Dorsolateral prefrontal cortex (tissue), 120 donors: ENCODE measurements at regions of chr3 and their contacts with region 1.

Region 1: GRCh38 chr3:66038726-66039589 is at the start of gene MAGI1:
- DNase-seq: peak; percentile 69 to 93 (median 88)
- H3K4me3 ChIP-seq: peak within 1 kb of the TSS; percentile 48 to 99 (median 88)
- H3K27ac ChIP-seq: peak within 1 kb of the TSS in 58 of 59 donors; percentile 44 to 97 (median 89)
- H3K27me3 ChIP-seq: no peaks in the 10 kb centered on the region
- CTCF ChIP-seq: peak in 30 of 56 donors; percentile 3 to 55 (median 20)
- total RNA-seq, gene MAGI1: 49.8 to 112 (median 77.4) TPM

Region 2: DNA sequence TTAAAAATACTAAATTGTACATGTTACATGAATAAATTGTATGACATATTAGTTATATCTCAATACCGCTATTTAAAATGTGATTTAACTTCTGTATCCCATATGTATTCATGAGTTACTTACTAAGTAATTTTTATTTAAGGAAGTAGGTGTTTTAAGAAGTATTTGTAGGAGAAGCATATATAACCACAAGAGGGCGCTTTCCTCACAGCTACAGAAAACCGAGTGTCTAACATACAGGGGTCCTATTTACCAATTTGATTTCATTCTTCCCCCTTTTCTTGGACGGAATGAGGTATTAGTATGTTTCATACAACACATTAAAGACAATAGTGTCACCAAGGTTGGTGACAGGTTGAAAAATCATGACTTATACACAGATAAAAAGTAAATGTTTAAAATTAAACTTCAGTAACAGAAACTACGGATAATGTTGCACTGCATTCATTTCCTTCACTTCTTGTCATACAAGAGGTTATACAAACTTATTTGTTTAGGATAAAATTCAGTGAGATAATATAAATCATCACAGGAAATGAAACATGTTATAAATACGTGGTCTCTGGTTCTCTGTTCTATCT is 253.8 kb before region 1 on chr3:
- intact Hi-C with region 1: loop called (anchors 5 kb)
- DNase-seq: peak in 1 of 10 donors; percentile 23
- H3K4me3 ChIP-seq: peak overlapping the region in 7 of 59 donors; percentile 8 to 26 (median 15)
- H3K27ac ChIP-seq: peak overlapping the region in 8 of 59 donors; percentile 7 to 56 (median 44)
- H3K27me3 ChIP-seq: no peaks in the 10 kb centered on the region
- CTCF ChIP-seq: peak; percentile 70 to 97 (median 88)

Region 3: DNA sequence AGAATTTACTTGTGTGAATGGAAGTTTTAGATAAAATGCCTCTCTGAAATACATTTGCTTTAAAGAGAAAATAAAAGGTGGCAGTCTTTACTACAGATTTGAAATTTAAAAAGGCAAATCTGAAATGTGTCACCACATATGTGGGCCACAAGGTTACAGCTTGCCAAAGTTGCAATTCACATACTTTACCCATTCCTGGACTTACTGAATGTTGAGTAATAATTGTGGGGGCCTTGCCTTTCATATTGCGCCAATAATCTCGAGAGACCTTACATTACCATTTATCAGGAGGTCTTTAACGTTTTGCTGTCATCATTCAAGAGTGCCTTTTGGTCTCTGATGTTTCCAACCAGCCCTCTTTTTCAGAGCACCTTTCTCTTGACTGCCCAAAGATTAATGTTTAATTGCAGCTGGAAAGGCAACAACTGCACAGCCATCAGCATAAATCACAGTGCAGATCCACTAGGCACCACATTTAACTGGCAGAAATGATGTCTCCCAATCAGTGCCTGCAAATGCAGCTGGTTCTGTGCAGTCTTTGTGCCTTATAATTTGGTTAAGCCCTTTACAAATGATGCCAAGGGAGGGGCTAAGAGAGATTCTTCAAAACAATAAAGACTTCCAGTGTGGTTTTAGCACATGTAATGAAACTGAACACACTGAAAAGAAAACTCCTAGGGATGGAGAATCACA is 207.1 kb before region 1 on chr3:
- intact Hi-C with region 1: loop called in 1 of 2 experiments (anchors 10 kb)
- DNase-seq: no peak
- H3K4me3 ChIP-seq: no peak overlapping the region
- H3K27ac ChIP-seq: peak overlapping the region in 35 of 59 donors; percentile 3 to 88 (median 57)
- H3K27me3 ChIP-seq: no peaks in the 10 kb centered on the region
- CTCF ChIP-seq: no peak

Region 4: DNA sequence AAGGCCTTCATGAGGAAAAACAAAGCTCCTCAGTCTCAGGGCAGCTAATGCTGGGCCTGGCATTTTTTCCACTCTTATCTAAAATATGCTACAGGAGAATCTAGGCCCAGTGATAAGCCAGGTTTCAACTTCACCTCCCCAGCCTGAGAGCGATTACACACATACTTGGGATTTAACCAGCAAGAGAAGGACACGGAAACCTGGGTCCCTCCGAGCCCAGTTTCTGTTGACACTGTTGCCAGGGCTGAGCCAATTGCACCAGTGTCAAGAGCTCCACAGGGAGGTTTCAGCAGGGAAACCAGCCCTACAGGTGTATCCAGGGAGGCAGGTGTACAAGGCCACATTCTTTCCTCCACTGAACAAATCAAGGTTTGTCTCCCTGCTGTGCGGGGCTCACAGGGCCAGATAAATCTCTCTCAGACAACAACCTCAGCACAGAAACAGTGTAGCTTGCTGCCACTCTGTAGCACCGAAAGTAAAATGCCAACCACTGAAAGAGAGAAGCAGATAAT is 85.6 kb before region 1 on chr3:
- intact Hi-C with region 1: loop called in 1 of 2 experiments (anchors 10 kb)
- DNase-seq: peak in 1 of 10 donors; percentile 66
- H3K4me3 ChIP-seq: peak overlapping the region in 1 of 59 donors; percentile 40
- H3K27ac ChIP-seq: peak overlapping the region in 35 of 59 donors; percentile 3 to 68 (median 39)
- H3K27me3 ChIP-seq: no peaks in the 10 kb centered on the region
- CTCF ChIP-seq: no peak

Region 5: DNA sequence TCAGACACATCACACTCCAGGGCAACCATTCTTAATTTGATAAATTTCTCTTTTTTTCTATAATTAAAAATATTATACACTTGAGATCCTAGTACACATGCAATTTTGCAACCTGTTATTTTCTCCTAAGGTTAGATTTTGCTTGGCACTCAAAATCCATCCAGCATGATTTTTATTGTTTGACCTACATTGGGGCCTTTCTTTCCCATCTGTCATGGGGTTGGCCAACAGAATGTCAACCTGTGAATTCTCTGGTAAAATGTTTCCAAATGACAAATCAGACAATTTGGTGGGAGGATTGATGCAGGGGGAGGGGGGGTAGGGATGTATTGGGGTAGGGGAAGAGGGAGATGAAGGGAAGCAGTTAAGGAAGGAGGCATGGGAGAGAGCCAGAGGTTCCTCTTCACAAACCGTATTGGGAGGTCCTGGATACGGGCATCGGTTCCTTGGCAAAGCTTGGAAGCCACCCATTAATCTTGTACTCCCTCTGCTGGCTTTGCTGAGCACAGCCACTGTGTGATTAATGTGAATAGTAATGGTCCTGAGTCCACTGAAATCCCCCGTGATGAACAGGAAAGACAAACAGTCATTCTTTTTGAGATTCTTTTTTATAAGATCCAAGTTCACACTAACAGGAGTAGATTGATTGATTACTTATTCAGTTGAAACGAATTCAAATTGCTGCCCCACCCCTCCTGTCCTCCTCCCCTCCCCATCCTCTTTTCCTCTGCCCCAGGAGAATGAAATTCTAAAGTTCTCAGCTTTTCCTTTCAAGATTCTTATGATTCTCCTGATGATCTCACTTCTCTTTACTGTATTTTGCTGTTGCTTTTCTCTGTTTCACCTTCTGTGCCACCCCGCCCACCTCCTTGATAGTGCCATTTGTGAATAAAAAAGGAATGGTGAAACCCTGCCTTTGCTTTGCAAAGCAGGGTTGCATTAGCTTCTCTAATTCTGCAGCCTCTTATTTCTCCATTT is 99.7 kb after region 1 on chr3:
- intact Hi-C with region 1: loop called in 1 of 2 experiments (anchors 5 kb)
- DNase-seq: peak in 7 of 10 donors; percentile 11 to 75 (median 48)
- H3K4me3 ChIP-seq: no peak overlapping the region
- H3K27ac ChIP-seq: peak overlapping the region in 1 of 59 donors; percentile 77
- H3K27me3 ChIP-seq: no peaks in the 10 kb centered on the region
- CTCF ChIP-seq: peak; percentile 45 to 85 (median 68)

Region 6: DNA sequence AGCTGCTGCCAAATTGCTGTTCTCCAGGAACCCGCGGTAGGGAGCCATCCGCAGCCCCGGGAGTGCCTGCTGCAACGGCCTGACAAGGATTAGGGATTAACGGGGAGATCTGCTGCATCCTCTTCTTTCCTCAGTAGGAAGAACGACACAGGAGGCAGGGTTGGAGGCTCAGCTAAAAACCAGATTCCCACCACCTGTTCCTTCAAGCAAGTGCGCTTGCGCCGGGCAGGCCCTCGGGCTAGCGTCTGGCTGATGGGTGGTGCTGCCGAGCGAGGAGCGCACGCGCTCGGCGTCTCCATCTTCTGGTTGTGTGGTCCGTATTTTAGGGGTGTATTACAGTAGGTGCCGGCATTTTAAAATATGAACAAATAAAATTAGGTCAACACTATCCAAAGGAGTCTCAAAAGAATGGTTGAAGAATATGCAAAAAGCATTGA is 156.4 kb after region 1 on chr3:
- intact Hi-C with region 1: loop called in 1 of 2 experiments (anchors 2 kb)
- DNase-seq: peak; percentile 60 to 92 (median 78)
- H3K4me3 ChIP-seq: peak overlapping the region; percentile 29 to 71 (median 57)
- H3K27ac ChIP-seq: peak overlapping the region in 7 of 59 donors; percentile 9 to 79 (median 38)
- H3K27me3 ChIP-seq: no peaks in the 10 kb centered on the region
- CTCF ChIP-seq: peak in 53 of 56 donors; percentile 9 to 70 (median 49)

Region 7: DNA sequence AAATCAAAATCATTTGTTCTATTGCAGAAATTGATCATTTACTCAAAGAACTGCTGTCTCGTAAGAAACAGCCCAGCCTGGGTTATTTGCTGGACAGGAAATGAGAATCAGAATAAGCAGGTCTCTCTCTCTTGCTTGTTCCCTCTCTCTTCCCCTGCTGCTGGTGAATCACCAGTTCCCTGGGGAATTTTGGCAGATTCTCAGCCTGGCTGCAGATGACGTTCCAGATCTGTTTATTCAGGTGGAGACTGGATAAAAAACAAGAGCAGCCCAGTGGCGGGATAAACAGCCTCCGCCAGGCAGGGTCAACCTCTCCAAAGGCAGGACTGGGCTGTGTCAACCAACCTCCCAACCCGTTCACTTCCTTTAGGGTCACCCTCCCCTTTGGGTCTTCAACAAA is 389.8 kb after region 1 on chr3:
- intact Hi-C with region 1: no loop called
- DNase-seq: peak in 6 of 10 donors; percentile 58 to 79 (median 66)
- H3K4me3 ChIP-seq: peak overlapping the region in 1 of 59 donors; percentile 6
- H3K27ac ChIP-seq: peak overlapping the region in 49 of 59 donors; percentile 10 to 86 (median 57)
- H3K27me3 ChIP-seq: no peaks in the 10 kb centered on the region
- CTCF ChIP-seq: no peak